Activated CD4-positive, alpha-beta T cell treated with anti-CD3 and anti-CD28 coated beads for 36 hours (primary cell): ENCODE measurements at regions of chr11 and their contacts with region 1.

Region 1: GRCh38 chr11:61061081-61061826 is 41.0 kb upstream of the CD5 start:
- DNase-seq: peak; percentile 93
- ATAC-seq: peak; percentile 79
- H3K4me3 Mint-ChIP-seq: peak overlapping the region; percentile 51
- H3K27ac Mint-ChIP-seq: peak overlapping the region; percentile 96
- H3K4me1 Mint-ChIP-seq: peaks cover 94% of the 10 kb centered on the region
- H3K27me3 Mint-ChIP-seq: no peaks in the 10 kb centered on the region

Region 2: GRCh38 chr11:60985991-60986915 is 75.0 kb before region 1 on chr11:
- CTCF ChIA-PET with region 1: interaction called, 7 read pairs
- POLR2A ChIA-PET with region 1: interaction called, 49 read pairs
- intact Hi-C with region 1: loop called (anchors 1 kb)
- DNase-seq: peak; percentile 97
- ATAC-seq: peak; percentile 76
- H3K4me3 Mint-ChIP-seq: peak overlapping the region; percentile 87
- H3K27ac Mint-ChIP-seq: peak overlapping the region; percentile 96
- H3K4me1 Mint-ChIP-seq: peaks cover 94% of the 10 kb centered on the region
- H3K27me3 Mint-ChIP-seq: no peaks in the 10 kb centered on the region

Region 3: DNA sequence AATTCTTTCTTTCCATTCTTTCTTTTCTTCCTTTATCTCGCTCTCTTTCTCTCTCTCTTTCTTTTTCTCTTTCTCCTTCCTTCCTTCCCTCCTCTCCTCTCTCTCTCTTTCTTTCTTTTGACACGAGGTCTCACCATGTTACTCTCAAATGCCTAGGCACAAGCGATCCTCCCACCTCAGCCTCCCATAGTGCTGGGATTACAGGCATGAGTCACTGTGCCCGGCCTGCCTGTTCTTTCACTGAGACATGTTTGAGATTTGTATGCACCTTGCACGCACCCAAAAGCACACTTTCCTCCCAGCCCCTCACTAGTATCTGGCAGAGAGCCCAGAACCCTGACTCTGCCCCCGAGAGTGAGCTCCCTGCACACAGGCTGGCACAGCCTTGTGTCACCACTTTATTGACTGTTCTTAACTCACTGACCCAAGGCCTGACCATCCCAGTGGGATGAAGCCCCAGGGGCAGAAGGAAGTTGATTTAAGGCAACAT is 32.9 kb before region 1 on chr11:
- CTCF ChIA-PET with region 1: interaction called, 3 read pairs
- POLR2A ChIA-PET with region 1: interaction called, 19 read pairs
- intact Hi-C with region 1: loop called (anchors 1 kb)
- DNase-seq: peak; percentile 87
- ATAC-seq: peak; percentile 45
- H3K4me3 Mint-ChIP-seq: peak overlapping the region; percentile 79
- H3K27ac Mint-ChIP-seq: peak overlapping the region; percentile 97
- H3K4me1 Mint-ChIP-seq: peaks cover 87% of the 10 kb centered on the region
- H3K27me3 Mint-ChIP-seq: no peaks in the 10 kb centered on the region

Region 4: DNA sequence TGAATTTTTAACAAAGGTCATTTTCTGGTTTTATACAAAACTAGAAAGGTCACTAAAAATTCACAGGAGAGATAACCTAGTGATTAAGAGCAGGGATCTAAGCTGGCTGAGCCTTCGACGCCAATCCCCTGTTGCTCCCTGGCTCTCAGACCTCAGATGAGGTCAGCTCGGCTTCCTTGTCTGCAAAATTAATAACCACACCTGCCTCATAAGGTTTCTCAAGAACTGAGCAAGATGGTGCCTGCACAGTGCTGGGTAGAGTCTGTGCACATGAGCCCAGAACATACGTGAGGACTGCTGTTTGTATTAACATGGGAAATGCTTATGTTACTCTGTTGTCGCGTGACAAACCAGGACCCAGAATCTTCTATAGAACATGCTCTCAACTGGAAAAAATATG is 16.7 kb after region 1 on chr11:
- CTCF ChIA-PET with region 1: interaction called, 64 read pairs
- POLR2A ChIA-PET with region 1: interaction called, 23 read pairs
- intact Hi-C with region 1: loop called (anchors 2 kb)
- DNase-seq: peak; percentile 33
- ATAC-seq: peak; percentile 21
- H3K4me3 Mint-ChIP-seq: peak overlapping the region; percentile 87
- H3K27ac Mint-ChIP-seq: peak overlapping the region; percentile 99
- H3K4me1 Mint-ChIP-seq: peaks cover 89% of the 10 kb centered on the region
- H3K27me3 Mint-ChIP-seq: no peaks in the 10 kb centered on the region

Region 5: DNA sequence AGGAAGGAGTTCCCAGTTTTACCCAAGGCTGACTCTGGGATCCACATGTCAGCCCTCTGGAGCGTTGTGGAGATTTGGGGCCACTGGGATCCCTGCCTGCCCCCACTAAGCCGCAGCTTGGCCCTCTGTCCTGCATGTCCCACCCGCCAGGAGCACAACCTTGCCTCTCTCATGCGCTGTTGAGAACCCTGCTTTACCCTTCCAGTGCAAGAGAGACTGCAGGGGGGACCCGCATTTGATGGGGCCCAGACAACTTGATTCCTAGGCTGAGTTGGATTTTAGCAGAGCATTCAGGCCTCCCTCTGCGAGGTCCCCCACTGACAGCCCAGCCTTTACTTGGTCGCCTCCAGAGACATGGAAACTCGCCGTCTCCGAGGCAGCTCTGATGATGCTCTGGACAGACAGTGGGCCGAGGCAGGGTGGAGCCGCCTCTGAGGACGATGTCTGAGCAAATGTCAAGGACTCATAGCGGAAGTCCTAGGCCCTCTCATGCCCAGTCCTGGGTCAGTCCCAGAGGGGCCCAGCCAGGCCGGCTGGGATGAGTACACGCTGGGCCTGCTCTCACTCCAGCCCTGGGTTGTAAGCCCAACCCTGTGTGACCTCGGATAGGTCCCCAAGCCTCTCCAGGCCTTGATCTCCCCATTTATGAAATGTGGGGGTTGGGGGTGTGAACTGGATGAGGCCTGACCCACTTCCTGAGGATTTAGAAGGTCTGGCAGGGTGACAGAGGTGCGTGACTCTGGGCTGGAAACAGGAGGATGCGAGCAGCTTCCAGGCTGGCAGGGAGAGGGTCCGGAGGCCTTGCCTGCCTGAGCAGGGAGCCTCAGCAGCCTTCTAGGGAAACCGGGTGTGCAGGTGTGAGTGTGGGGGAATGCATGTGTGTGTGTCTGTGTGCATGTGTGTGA is 41.7 kb after region 1 on chr11:
- CTCF ChIA-PET with region 1: interaction called, 3 read pairs
- POLR2A ChIA-PET with region 1: interaction called, 3 read pairs
- intact Hi-C with region 1: loop called (anchors 1 to 2 kb)
- DNase-seq: peak; percentile 49
- ATAC-seq: peak; percentile 16
- H3K4me3 Mint-ChIP-seq: no peak overlapping the region
- H3K27ac Mint-ChIP-seq: no peak overlapping the region
- H3K4me1 Mint-ChIP-seq: peaks cover 25% of the 10 kb centered on the region
- H3K27me3 Mint-ChIP-seq: no peaks in the 10 kb centered on the region